ENCODE measurements at regions of chr17 and their contacts with region 1.

Region 1: DNA sequence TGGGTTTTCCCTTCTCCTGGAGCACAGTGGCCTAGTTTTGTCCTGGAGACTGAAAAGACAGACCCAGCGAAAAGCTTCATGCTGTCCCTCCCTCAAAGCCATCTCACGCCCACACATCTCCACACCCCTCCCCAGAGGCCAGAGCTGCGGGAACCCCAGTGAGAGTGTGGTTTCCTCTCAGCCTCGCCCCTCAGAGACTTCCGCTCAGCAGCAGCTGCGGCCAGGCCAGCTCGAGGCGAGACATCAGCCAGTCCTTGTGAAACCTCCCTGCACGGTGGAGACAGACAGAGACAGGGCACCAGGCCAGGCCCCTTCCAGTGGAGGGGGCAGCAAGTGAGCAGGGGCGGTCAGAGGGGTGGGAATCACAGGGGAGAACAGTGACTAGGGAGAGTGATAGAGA is 77.0 kb upstream of the TNRC6C start:
- DNase-seq: peak; percentile 81
- H3K4me3 Mint-ChIP-seq: peak overlapping the region; percentile 77
- H3K27ac Mint-ChIP-seq: peak overlapping the region; percentile 93
- H3K4me1 Mint-ChIP-seq: peaks cover 42% of the 10 kb centered on the region
- H3K27me3 Mint-ChIP-seq: peaks cover 6% of the 10 kb centered on the region

Region 2: GRCh38 chr17:77779711-77780539 is 101.6 kb before region 1 on chr17:
- intact Hi-C with region 1: loop called (anchors 10 kb)
- DNase-seq: no peak
- H3K4me3 Mint-ChIP-seq: no peak overlapping the region
- H3K27ac Mint-ChIP-seq: no peak overlapping the region
- H3K4me1 Mint-ChIP-seq: peaks cover 18% of the 10 kb centered on the region
- H3K27me3 Mint-ChIP-seq: no peaks in the 10 kb centered on the region

Region 3: DNA sequence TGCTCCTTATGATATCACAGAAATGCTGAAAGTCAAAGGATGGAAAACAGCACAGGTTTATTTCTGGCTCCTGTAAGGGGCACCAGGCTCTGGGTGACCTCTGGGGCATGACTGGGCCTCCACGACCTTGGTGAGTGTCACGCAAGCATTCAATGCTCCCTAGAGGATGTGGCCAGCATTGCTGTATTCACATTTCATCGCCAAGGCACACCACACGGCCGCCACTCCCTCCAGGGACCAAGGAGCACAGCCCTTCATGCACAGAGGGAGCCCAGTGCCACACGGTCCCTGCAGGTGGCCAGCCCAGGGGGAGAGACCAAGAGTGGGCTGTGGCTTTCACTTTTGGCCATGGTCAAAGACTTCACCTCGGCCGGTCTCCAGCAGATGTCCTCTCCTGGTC is 60.4 kb before region 1 on chr17:
- intact Hi-C with region 1: no loop called
- DNase-seq: no peak
- H3K4me3 Mint-ChIP-seq: no peak overlapping the region
- H3K27ac Mint-ChIP-seq: no peak overlapping the region
- H3K4me1 Mint-ChIP-seq: no peaks in the 10 kb centered on the region
- H3K27me3 Mint-ChIP-seq: peaks cover 21% of the 10 kb centered on the region

Region 4: GRCh38 chr17:77842528-77843147 is 38.9 kb before region 1 on chr17:
- intact Hi-C with region 1: loop called (anchors 1 kb)
- DNase-seq: no peak
- H3K4me3 Mint-ChIP-seq: peak overlapping the region; percentile 2
- H3K27ac Mint-ChIP-seq: peak overlapping the region; percentile 76
- H3K4me1 Mint-ChIP-seq: peaks cover 44% of the 10 kb centered on the region
- H3K27me3 Mint-ChIP-seq: no peaks in the 10 kb centered on the region

Measured in activated T-helper 2 cell treated with anti-CD3 and anti-CD28 coated beads, Interferon-gamma antibody, Interleukin-2, Interleukin-4, amounts not matched to agents 10 μg/mL and 5 μg/mL and 100 μg/mL, durations not matched to agents 14 hours and 24 hours and 36 hours (primary cell).